ENCODE measurements at regions of chr12 and their contacts with region 1.

Region 1: GRCh38 chr12:57063991-57064685 is 14.2 kb upstream of the MYO1A start:
- DNase-seq: no peak
- ATAC-seq: no peak
- H3K4me3 ChIP-seq: no peak overlapping the region
- H3K27ac ChIP-seq: no peak overlapping the region
- H3K4me1 ChIP-seq: 0 out of 3 replicates have a peak, but pooled peaks cover 6% of the 10 kb centered on the region
- CTCF ChIP-seq: no peak
- EP300 ChIP-seq: no peak
- POLR2A ChIP-seq: no peak
- RAD21 ChIP-seq: no peak

Region 2: GRCh38 chr12:56980268-56980667 is 83.9 kb before region 1 on chr12:
- CTCF ChIA-PET with region 1: no interaction called
- POLR2A ChIA-PET with region 1: no interaction called
- DNase-seq: no peak
- ATAC-seq: no peak
- H3K4me3 ChIP-seq: no peak overlapping the region
- H3K27ac ChIP-seq: no peak overlapping the region
- H3K4me1 ChIP-seq: no peaks in the 10 kb centered on the region
- CTCF ChIP-seq: no peak
- EP300 ChIP-seq: no peak
- POLR2A ChIP-seq: no peak
- RAD21 ChIP-seq: no peak

Region 3: DNA sequence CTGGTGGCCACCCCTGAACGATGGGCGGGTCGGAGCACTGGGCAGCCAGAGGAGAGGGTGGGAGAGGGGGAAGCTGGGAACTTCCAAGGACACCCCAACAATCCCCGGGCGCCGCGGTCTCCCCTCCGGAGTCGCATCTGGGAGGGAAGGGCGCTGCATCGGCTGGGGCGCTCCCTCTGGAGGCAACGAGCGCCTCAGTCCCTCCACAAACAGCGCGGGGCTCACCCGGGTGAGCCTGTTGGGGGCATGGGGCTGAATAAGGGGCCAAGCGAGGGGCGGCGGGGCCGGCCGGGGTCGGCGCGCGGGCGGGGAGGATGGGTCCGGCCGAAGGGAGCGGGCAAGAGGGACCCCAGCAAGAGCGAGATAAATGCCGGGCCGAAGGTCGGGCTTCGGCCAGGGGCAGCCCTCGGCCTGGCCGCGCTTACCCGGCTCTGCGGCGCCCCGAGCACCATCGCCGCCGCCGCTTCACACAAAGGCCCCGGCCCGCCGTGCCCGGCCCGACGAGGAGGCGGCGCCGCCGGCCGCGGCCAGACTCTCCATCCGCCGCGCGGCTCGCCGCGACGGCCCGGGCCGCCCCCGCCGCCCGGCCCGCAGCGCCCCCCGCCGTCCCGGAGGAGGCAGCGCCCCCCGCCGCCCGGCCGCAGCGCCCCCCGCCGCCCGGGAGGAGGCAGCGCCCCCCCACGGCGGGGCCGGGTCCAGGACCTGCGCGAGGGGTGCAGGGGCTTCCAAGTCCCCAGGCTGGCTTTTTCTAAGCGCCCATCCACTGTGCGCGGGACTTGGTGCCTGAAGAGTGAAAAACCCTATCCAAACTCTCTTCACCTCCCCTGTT is 57.9 kb before region 1 on chr12 and contains the start of gene ZBTB39:
- CTCF ChIA-PET with region 1: interaction called, 161 read pairs
- POLR2A ChIA-PET with region 1: no interaction called
- DNase-seq: peak; percentile 60 to 82
- ATAC-seq: peak; percentile 67 to 76
- H3K4me3 ChIP-seq: peak within 1 kb of the TSS; percentile 99
- H3K27ac ChIP-seq: peak within 1 kb of the TSS; percentile 98 to 99
- H3K4me1 ChIP-seq: peaks cover 39% of the 10 kb centered on the region
- CTCF ChIP-seq: peak; percentile 97
- EP300 ChIP-seq: no peak
- POLR2A ChIP-seq: peak; percentile 83
- RAD21 ChIP-seq: no peak; a peak in 1 of 5 replicates
- polyA plus RNA-seq, gene ZBTB39: 9.5 and 9.8 TPM in 2 replicates

Region 4: GRCh38 chr12:57031138-57031725 is 32.9 kb before region 1 on chr12:
- CTCF ChIA-PET with region 1: interaction called, 12 read pairs
- POLR2A ChIA-PET with region 1: no interaction called
- DNase-seq: peak in 1 of 2 experiments; percentile 35
- ATAC-seq: peak in 1 of 2 experiments; percentile 47; a peak in 3 of 6 replicates
- H3K4me3 ChIP-seq: no peak overlapping the region
- H3K27ac ChIP-seq: peak overlapping the region in 1 of 2 experiments; percentile 37; a peak in 2 of 6 replicates
- H3K4me1 ChIP-seq: peaks cover 6% of the 10 kb centered on the region; the same call in 2 of the 3 replicates
- CTCF ChIP-seq: no peak
- EP300 ChIP-seq: no peak
- POLR2A ChIP-seq: no peak
- RAD21 ChIP-seq: no peak

Region 5: GRCh38 chr12:57088459-57089248 is 24.5 kb after region 1 on chr12 and contains the start of gene NAB2:
- CTCF ChIA-PET with region 1: interaction called, 152 read pairs
- POLR2A ChIA-PET with region 1: interaction called, 24 read pairs
- DNase-seq: peak; percentile 89 to 97
- ATAC-seq: peak; percentile 48 to 71
- H3K4me3 ChIP-seq: peak within 1 kb of the TSS; percentile 89
- H3K27ac ChIP-seq: peak within 1 kb of the TSS; percentile 96 to 100
- H3K4me1 ChIP-seq: peaks cover 19% of the 10 kb centered on the region
- CTCF ChIP-seq: no peak
- EP300 ChIP-seq: no peak
- POLR2A ChIP-seq: peak; percentile 67
- RAD21 ChIP-seq: no peak
- polyA plus RNA-seq, gene NAB2: 8.6 and 10.1 TPM in 2 replicates

Region 6: DNA sequence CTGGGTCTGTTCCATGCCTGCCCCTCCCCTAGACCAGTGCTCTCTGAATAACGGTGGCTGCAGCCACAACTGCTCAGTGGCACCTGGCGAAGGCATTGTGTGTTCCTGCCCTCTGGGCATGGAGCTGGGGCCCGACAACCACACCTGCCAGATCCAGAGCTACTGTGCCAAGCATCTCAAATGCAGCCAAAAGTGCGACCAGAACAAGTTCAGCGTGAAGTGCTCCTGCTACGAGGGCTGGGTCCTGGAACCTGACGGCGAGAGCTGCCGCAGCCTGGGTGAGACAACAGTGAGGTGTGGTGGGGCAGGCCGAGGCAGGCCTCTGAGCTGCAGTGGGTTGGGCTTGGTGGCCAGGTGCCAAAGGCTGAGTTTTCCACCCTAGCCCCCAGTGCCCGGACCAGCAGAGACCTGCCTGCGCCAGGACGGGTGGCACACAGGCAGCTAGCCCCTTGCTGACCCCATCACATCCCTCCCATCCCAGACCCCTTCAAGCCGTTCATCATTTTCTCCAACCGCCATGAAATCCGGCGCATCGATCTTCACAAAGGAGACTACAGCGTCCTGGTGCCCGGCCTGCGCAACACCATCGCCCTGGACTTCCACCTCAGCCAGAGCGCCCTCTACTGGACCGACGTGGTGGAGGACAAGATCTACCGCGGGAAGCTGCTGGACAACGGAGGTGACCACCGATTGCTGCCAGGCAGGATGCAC is 111.4 kb after region 1 on chr12:
- CTCF ChIA-PET with region 1: interaction called, 44 read pairs
- POLR2A ChIA-PET with region 1: no interaction called
- DNase-seq: peak; percentile 79 to 88
- ATAC-seq: peak; percentile 67 to 90
- H3K4me3 ChIP-seq: no peak overlapping the region
- H3K27ac ChIP-seq: peak overlapping the region; percentile 28 to 64; a peak in 3 of 6 replicates
- H3K4me1 ChIP-seq: peaks cover 16% of the 10 kb centered on the region; the same call in 2 of the 3 replicates
- CTCF ChIP-seq: peak; percentile 83
- EP300 ChIP-seq: no peak
- POLR2A ChIP-seq: no peak
- RAD21 ChIP-seq: peak; percentile 72 to 75